Dorsolateral prefrontal cortex (tissue), 120 donors: ENCODE measurements at regions of chr6 and their contacts with region 1.

Region 1: DNA sequence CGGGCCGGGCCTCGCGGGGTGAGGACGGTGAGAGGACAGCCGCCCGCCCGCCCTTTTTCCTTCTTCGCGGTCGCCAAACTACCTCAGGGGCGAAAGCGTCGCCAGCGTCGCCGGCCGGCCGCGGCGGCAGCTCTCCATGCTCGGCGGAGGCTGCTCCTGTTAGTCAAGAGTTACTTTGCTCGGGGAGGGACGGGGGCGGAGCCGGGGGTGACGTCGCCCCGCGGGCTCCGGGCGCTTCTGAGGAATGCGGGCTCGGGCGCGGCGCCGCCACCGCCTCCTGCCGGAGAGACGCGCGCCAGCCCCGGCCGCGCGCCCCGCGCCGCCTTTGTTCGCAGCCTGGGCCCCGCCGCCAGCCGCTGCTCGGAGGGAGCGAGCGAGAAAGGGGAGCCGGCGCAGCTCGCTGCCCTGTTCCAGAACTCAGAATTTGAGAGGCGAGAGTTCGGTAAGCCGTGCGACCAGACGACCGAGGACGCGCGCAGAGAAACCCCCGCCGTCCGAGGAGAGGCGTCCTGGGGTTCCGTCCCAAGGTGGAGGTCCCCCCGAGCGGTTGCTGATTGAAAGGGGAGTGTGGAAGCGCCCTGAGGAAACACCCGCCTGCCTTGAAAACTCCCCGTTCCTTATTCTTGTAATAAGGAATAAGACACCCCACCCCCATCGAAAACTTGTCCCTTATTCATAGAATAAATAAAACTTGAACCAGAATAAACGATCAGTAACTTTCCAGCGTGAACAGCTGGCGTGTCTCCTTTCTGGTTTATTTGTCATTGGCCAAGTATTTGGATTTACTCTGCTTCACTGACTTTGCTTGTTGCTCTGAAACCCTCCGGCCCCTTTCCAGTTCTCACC is at the start of gene PTPRK:
- DNase-seq: peak; percentile 48 to 95 (median 93)
- H3K4me3 ChIP-seq: peak within 1 kb of the TSS; percentile 66 to 96 (median 87)
- H3K27ac ChIP-seq: peak within 1 kb of the TSS; percentile 83 to 98 (median 96)
- H3K27me3 ChIP-seq: no peaks in the 10 kb centered on the region
- CTCF ChIP-seq: peak in 54 of 56 donors; percentile 9 to 90 (median 62)
- total RNA-seq, gene PTPRK: 83.1 to 211 (median 136) TPM

Region 2: GRCh38 chr6:127737009-127737486 is 783.6 kb before region 1 on chr6:
- intact Hi-C with region 1: loop called in 1 of 2 experiments (anchors 10 kb)
- DNase-seq: peak in 3 of 10 donors; percentile 22 to 39 (median 27)
- H3K4me3 ChIP-seq: no peak overlapping the region
- H3K27ac ChIP-seq: peak overlapping the region in 1 of 59 donors; percentile 34
- H3K27me3 ChIP-seq: no peaks in the 10 kb centered on the region
- CTCF ChIP-seq: peak; percentile 52 to 91 (median 77)

Region 3: GRCh38 chr6:127855542-127856159 is 665.0 kb before region 1 on chr6:
- intact Hi-C with region 1: loop called (anchors 5 kb)
- DNase-seq: peak in 3 of 10 donors; percentile 34 to 70 (median 41)
- H3K4me3 ChIP-seq: peak overlapping the region in 4 of 59 donors; percentile 2 to 42 (median 20)
- H3K27ac ChIP-seq: peak overlapping the region in 40 of 59 donors; percentile 5 to 78 (median 51)
- H3K27me3 ChIP-seq: no peaks in the 10 kb centered on the region
- CTCF ChIP-seq: peak; percentile 40 to 88 (median 68)

Region 4: GRCh38 chr6:128068116-128068479 is 452.6 kb before region 1 on chr6:
- intact Hi-C with region 1: loop called in 1 of 2 experiments (anchors 10 kb)
- DNase-seq: peak in 1 of 10 donors; percentile 31
- H3K4me3 ChIP-seq: peak overlapping the region in 16 of 59 donors; percentile 1 to 53 (median 38)
- H3K27ac ChIP-seq: peak overlapping the region in 44 of 59 donors; percentile 7 to 86 (median 71)
- H3K27me3 ChIP-seq: no peaks in the 10 kb centered on the region
- CTCF ChIP-seq: peak in 10 of 56 donors; percentile 13 to 48 (median 32)

Region 5: DNA sequence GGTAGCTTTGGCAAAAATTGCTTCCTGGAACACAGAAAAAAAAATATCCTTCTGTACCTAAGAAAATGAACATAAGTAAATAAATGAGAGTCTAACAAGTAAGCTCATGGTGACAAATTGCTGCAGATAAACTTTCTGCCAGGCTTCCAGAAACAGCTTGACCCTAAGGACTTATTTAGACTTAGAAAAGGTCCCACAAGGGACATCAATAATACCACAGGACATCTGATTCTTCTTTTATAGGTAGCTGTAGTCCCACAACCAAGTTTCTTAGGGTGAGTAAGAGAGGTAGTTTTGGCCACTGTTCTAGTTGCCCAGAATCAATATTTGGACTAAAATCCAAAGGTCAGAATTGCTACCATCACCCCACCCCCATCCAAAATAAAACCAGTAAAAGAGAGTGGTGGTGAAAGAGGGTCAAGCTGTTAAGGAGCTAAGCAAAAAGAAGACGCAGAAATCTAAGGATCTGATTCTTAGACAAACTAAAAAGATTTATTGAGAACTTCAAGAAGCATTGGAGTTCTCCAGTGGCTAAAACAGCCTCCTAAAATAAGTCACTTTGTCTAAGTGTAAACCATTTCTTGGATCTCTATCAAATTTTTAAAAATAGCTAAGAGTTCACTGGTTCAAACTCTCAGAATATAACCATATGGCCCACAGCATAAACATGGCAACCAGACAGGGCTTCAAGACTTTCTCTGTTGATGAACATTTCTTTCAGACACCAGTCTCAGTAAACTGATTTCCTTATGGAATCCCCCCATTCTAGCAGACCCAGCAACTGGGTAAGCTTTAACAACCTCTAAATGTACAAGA is 180.8 kb before region 1 on chr6:
- intact Hi-C with region 1: loop called in 1 of 2 experiments (anchors 10 kb)
- DNase-seq: no peak
- H3K4me3 ChIP-seq: no peak overlapping the region
- H3K27ac ChIP-seq: peak overlapping the region in 8 of 59 donors; percentile 1 to 24 (median 10)
- H3K27me3 ChIP-seq: no peaks in the 10 kb centered on the region
- CTCF ChIP-seq: no peak

Region 6: GRCh38 chr6:128508588-128509296 is 11.9 kb before region 1 on chr6:
- intact Hi-C with region 1: no loop called
- DNase-seq: peak in 4 of 10 donors; percentile 34 to 74 (median 63)
- H3K4me3 ChIP-seq: peak overlapping the region in 42 of 59 donors; percentile 0 to 58 (median 29)
- H3K27ac ChIP-seq: peak overlapping the region in 57 of 59 donors; percentile 3 to 98 (median 87)
- H3K27me3 ChIP-seq: no peaks in the 10 kb centered on the region
- CTCF ChIP-seq: peak in 1 of 56 donors; percentile 11

Region 7: DNA sequence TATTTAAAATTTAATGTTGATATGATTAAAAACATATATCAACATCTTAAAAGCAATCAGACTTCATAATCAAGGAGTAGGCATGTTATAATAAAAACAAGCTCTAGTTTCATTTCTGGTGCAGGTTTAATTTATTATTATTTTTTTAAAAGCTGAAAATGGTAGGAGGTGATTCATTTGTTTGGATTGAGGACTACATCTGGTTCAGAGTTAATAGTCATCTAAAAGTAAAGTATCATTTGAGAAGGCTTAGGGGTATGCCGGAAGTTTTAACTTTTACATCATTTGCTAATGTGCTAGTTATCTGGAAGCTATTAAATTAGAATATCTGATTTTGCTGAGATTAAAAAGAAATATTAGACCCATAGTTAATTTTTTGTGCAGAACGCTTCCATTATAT is 192.8 kb after region 1 on chr6:
- intact Hi-C with region 1: loop called in 1 of 2 experiments (anchors 10 kb)
- DNase-seq: no peak
- H3K4me3 ChIP-seq: no peak overlapping the region
- H3K27ac ChIP-seq: no peak overlapping the region
- H3K27me3 ChIP-seq: no peaks in the 10 kb centered on the region
- CTCF ChIP-seq: no peak

Region 8: GRCh38 chr6:128731249-128732165 is 210.8 kb after region 1 on chr6:
- intact Hi-C with region 1: loop called in 1 of 2 experiments (anchors 10 kb)
- DNase-seq: no peak
- H3K4me3 ChIP-seq: no peak overlapping the region
- H3K27ac ChIP-seq: peak overlapping the region in 26 of 59 donors; percentile 6 to 66 (median 36)
- H3K27me3 ChIP-seq: no peaks in the 10 kb centered on the region
- CTCF ChIP-seq: peak in 55 of 56 donors; percentile 34 to 85 (median 65)